ENCODE measurements at regions of chr20 and their contacts with region 1.

Region 1: GRCh38 chr20:12925214-12925755 is 83.5 kb upstream of the SPTLC3 start:
- ATAC-seq: peak; percentile 92 to 98 (median 95)
- H3K4me3 ChIP-seq: no peak overlapping the region
- H3K27ac ChIP-seq: no peak overlapping the region
- H3K4me1 ChIP-seq: peaks cover 9 to 14% of the 10 kb centered on the region in 2 donors

Region 2: DNA sequence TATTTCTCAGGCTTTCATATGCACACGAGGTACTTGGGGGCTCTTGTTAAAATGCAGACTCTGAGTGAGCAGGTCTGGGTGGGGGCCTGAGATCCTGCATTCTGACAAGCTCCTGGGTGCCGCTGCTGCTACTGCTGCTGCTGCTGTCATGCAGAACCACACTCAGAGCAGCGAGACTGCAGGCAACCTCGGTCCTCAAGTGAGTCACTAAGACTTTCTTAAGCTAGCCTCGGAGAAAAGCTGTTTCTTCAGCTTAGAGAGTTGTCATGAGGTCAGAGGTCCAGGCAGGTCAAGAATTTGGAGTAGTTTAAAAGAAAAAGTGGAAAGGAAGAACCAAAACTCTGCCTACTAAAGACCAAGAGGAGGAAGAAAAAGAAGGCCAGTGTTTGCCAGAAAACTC is 176.4 kb after region 1 on chr20:
- in situ Hi-C with region 1: loop called in 2 of 9 experiments (anchors 25 kb)
- ATAC-seq: no peak
- H3K4me3 ChIP-seq: no peak overlapping the region
- H3K27ac ChIP-seq: no peak overlapping the region
- H3K4me1 ChIP-seq: peaks cover 6 to 9% of the 10 kb centered on the region in 2 donors

Region 3: DNA sequence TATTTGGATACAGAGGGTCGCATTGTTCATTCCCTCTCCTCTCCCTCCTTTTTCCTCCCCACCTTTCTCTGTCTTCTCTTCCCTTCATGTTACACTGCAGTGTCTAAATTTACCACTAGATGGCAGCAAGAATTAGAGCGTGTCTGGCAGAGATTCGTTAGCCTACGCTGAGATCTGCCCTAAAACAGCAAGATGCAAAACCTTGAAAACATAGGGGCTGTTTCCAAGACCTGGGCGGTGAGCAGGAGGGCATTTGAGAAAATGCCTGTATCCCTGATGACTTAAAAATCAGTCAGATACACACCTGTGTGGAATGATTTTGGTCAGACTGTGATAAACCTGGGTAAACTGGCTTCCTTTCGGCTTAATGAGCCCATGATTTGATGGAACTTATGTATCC is 194.3 kb after region 1 on chr20:
- in situ Hi-C with region 1: loop called in 1 of 9 experiments (anchors 25 kb)
- ATAC-seq: peak; percentile 61 to 97 (median 79)
- H3K4me3 ChIP-seq: no peak overlapping the region
- H3K27ac ChIP-seq: no peak overlapping the region
- H3K4me1 ChIP-seq: peaks cover 0 to 2% of the 10 kb centered on the region in 2 donors

Region 4: GRCh38 chr20:13771853-13772453 is 846.7 kb after region 1 on chr20:
- in situ Hi-C with region 1: loop called in 3 of 9 experiments (anchors 25 kb)
- ATAC-seq: peak in 1 of 8 experiments; percentile 31
- H3K4me3 ChIP-seq: no peak overlapping the region
- H3K27ac ChIP-seq: no peak overlapping the region
- H3K4me1 ChIP-seq: no peaks in the 10 kb centered on the region

Region 5: DNA sequence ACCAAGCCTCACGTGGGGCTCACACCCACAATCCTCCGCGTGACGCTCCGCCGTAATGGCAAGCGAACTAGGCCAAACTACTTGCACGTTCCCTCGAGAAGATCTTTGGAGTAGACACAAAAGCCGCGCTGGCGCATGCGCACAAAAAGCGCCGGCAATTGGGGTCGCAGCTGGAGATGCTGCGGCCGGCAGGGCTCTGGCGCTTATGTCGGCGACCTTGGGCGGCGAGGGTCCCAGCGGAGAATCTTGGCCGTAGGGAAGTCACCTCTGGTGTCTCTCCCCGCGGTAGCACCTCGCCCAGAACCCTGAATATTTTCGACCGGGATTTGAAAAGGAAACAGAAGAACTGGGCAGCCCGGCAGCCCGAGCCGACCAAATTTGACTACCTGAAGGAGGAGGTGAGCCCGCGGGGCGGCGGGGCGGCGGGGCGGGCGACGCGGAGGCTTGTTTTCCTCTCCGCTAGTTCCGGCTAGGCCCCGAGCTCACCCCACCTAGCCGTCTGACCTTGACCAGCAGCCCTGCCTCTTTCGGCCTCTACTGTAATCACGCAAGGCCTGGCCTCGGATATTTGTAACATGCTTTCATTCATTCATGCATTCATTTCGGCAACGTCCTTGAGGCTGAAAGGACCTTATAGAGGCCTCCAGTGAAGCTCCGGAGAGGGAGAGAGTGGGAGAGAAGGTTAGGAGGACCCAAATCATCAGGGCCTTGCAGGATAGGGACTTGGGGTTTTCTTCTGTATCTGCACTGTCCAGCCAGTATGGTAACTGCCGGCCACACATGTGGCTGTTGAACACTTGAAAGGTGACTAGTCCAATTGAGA is 859.8 kb after region 1 on chr20 and contains the starts of genes ESF1 and NDUFAF5:
- in situ Hi-C with region 1: loop called in 2 of 9 experiments (anchors 25 kb)
- ATAC-seq: peak; percentile 91 to 99 (median 96)
- H3K4me3 ChIP-seq: peak within 1 kb of the TSS; percentile 54 to 94 (median 66)
- H3K27ac ChIP-seq: peak within 1 kb of the TSS; percentile 68 to 74
- H3K4me1 ChIP-seq: peaks cover 13 to 20% of the 10 kb centered on the region in 2 donors
- total RNA-seq, gene ESF1: 13.9 to 29.6 (median 21.8) TPM
- total RNA-seq, gene NDUFAF5: 17.4 to 33.3 (median 29.4) TPM

Measured in motor neuron (in vitro differentiated cells).